CD14-positive monocyte (primary cell): ENCODE measurements at regions of chr12 and their contacts with region 1.

Region 1: GRCh38 chr12:101773650-101774162 is 34.4 kb upstream of the SYCP3 start:
- DNase-seq: peak; percentile 71 to 79 (median 77)
- H3K4me3 ChIP-seq: no peak overlapping the region
- H3K4me3 Mint-ChIP-seq: no peak overlapping the region
- H3K27ac ChIP-seq: no peak overlapping the region
- H3K27ac Mint-ChIP-seq: peak overlapping the region in 6 of 7 donors; percentile 28 to 90 (median 79)
- H3K4me1 ChIP-seq: peaks cover 51 to 59% of the 10 kb centered on the region in 2 donors
- H3K4me1 Mint-ChIP-seq: peaks cover 59% of the 10 kb centered on the region
- H3K27me3 ChIP-seq: no peaks in the 10 kb centered on the region
- H3K27me3 Mint-ChIP-seq: no peaks in the 10 kb centered on the region
- CTCF ChIP-seq: peak; percentile 98

Region 2: DNA sequence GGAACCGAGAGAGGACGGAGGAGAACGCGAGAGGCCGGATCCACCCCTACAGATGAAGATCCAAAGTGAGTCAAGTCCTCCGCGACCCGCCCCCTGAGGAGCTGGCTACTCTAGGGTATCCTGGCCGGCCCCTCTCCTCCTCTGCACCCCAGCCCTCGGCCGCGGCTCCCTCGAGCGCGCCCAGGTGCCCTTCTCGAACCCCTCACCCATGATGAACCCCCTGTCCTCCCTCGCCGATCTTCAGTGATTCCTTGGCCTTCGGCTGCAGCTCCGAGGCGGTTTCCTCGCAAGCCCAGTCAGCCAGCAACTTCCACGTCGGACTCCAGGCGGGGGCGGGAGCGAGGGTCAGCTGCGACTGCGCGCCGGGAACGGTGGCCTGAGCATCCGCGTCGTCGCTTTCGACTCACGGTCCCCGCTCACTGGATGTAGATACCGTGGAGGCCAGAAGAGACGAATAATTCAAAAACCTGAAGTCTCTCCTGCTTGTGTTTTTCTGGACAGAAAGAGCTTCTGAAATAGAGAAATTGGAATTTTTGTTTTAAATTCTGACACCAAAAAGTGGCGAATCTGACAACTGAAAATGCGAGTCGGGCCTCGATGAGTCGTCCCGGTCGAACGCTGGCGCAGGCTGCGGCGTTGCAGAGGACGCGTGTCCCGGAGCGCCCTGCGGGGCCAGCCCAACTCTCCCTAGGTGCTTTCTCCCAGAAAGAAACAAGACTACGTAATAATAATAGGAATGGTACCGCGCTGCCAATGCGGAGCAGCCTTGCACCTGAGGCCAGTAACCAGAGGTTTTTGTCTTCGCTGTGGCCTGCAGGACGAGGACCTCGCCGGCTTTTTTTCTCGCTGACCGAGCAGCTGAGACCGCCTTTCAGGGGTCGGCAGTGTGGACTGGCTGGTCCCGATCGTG is 366.0 kb before region 1 on chr12 and contains the start of gene ARL1:
- intact Hi-C with region 1: loop called in 1 of 2 experiments (anchors 10 kb)
- DNase-seq: peak; percentile 83 to 87 (median 86)
- H3K4me3 ChIP-seq: peak within 1 kb of the TSS; percentile 54 to 94 (median 91)
- H3K4me3 Mint-ChIP-seq: peak within 1 kb of the TSS; percentile 99 to 100
- H3K27ac ChIP-seq: peak within 1 kb of the TSS; percentile 82 to 97
- H3K27ac Mint-ChIP-seq: peak within 1 kb of the TSS; percentile 91 to 99 (median 98)
- H3K4me1 ChIP-seq: peaks cover 17 to 22% of the 10 kb centered on the region in 2 donors
- H3K4me1 Mint-ChIP-seq: peaks cover 23% of the 10 kb centered on the region
- H3K27me3 ChIP-seq: no peaks in the 10 kb centered on the region
- H3K27me3 Mint-ChIP-seq: peaks cover 0 to 1% (median 1%) of the 10 kb centered on the region in 3 donors
- CTCF ChIP-seq: no peak
- polyA plus RNA-seq, gene ARL1: 14.7 to 34.8 (median 27.3) TPM

Region 3: DNA sequence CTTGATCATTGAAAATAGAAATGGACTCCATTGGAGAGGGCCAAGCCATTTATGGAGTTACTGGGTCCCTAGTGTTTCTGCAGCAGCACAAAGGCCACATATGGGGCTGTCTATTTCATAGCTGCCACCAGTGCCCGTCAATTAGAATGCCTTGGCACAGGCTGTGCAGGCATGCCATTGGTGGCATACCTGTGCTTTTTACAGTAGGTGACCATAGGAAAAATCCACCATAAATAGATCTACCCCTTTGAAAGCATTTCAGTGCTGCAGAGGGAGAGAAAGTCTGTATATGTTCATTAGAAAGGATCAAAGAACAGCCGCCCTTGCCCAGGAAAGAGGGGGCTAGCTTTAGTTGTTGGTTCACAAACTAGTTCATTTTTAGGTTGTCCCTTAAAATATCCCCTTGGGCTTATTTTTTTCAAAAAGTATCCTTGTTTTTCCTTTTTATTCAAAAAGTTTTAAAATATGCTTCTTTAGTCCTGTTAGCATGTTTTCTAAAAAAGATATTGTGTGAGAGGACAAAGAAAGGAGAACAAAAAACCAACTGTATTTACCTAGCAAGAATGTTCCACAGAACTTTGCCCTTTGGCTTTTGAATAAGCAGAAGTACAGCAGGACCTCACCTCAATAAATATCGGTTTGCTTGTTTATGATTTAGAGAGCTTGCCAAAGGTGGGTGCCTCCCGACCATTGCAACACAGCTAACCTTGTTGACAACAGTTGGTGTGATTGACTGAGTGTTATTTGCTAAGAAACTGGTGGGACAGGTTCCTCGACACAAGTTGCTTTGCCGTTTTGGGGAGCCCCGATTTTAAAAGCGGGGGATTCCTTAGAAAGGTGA is 165.6 kb before region 1 on chr12:
- intact Hi-C with region 1: no loop called
- DNase-seq: no peak
- H3K4me3 ChIP-seq: no peak overlapping the region
- H3K4me3 Mint-ChIP-seq: no peak overlapping the region
- H3K27ac ChIP-seq: no peak overlapping the region
- H3K27ac Mint-ChIP-seq: no peak overlapping the region
- H3K4me1 ChIP-seq: no peaks in the 10 kb centered on the region
- H3K4me1 Mint-ChIP-seq: peaks cover 11% of the 10 kb centered on the region
- H3K27me3 ChIP-seq: no peaks in the 10 kb centered on the region
- H3K27me3 Mint-ChIP-seq: peaks cover 0 to 2% (median 0%) of the 10 kb centered on the region in 3 donors
- CTCF ChIP-seq: no peak

Region 4: GRCh38 chr12:101830367-101831325 is 56.9 kb after region 1 on chr12 and contains the start of gene GNPTAB:
- intact Hi-C with region 1: loop called (anchors 2 to 5 kb)
- DNase-seq: peak; percentile 89 to 95 (median 93)
- H3K4me3 ChIP-seq: peak within 1 kb of the TSS; percentile 61 to 99 (median 92)
- H3K4me3 Mint-ChIP-seq: peak within 1 kb of the TSS; percentile 97 to 99
- H3K27ac ChIP-seq: peak within 1 kb of the TSS; percentile 46 to 74
- H3K27ac Mint-ChIP-seq: peak within 1 kb of the TSS; percentile 78 to 91 (median 88)
- H3K4me1 ChIP-seq: peaks cover 23 to 48% of the 10 kb centered on the region in 2 donors
- H3K4me1 Mint-ChIP-seq: peaks cover 47% of the 10 kb centered on the region
- H3K27me3 ChIP-seq: no peaks in the 10 kb centered on the region
- H3K27me3 Mint-ChIP-seq: peaks cover 0 to 1% (median 0%) of the 10 kb centered on the region in 3 donors
- CTCF ChIP-seq: peak; percentile 69
- polyA plus RNA-seq, gene GNPTAB: 14.4 to 29.1 (median 24.1) TPM

Region 5: DNA sequence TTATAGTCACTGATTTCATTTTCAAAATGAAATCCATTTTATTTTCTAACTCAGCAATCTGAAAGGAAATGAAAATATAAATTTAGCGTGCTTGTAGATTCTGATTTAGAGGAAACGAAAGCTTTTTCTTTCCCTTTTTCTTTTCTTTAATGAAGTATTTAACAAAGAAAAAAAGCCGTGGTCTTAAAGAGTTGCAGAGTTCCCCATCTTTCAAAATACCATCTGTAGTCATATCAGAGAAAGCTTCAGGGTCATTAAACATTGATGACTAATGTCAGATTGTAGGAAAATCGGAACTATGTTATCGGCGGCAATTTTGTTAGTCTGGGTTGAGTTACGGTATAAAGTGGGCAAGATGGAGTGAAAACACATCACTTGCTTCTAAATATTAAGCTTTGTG is 135.9 kb after region 1 on chr12:
- intact Hi-C with region 1: loop called in 1 of 2 experiments (anchors 10 kb)
- DNase-seq: peak; percentile 33 to 82 (median 62)
- H3K4me3 ChIP-seq: peak overlapping the region; percentile 19 to 67 (median 42)
- H3K4me3 Mint-ChIP-seq: peak overlapping the region; percentile 65 to 85
- H3K27ac ChIP-seq: peak overlapping the region in 1 of 2 donors; percentile 74
- H3K27ac Mint-ChIP-seq: peak overlapping the region; percentile 63 to 88 (median 82)
- H3K4me1 ChIP-seq: peaks cover 13 to 31% of the 10 kb centered on the region in 2 donors
- H3K4me1 Mint-ChIP-seq: peaks cover 30% of the 10 kb centered on the region
- H3K27me3 ChIP-seq: no peaks in the 10 kb centered on the region
- H3K27me3 Mint-ChIP-seq: no peaks in the 10 kb centered on the region
- CTCF ChIP-seq: no peak

Region 6: GRCh38 chr12:103548622-103549601 is 1775.2 kb after region 1 on chr12:
- intact Hi-C with region 1: loop called in 1 of 2 experiments (anchors 10 kb)
- DNase-seq: peak; percentile 1 to 40 (median 6)
- H3K4me3 ChIP-seq: no peak overlapping the region
- H3K4me3 Mint-ChIP-seq: no peak overlapping the region
- H3K27ac ChIP-seq: no peak overlapping the region
- H3K27ac Mint-ChIP-seq: no peak overlapping the region
- H3K4me1 ChIP-seq: no peaks in the 10 kb centered on the region
- H3K4me1 Mint-ChIP-seq: no peaks in the 10 kb centered on the region
- H3K27me3 ChIP-seq: no peaks in the 10 kb centered on the region
- H3K27me3 Mint-ChIP-seq: peaks cover 0 to 6% (median 6%) of the 10 kb centered on the region in 3 donors
- CTCF ChIP-seq: peak; percentile 79